ENCODE measurements at regions of chr9 and their contacts with region 1.

Region 1: DNA sequence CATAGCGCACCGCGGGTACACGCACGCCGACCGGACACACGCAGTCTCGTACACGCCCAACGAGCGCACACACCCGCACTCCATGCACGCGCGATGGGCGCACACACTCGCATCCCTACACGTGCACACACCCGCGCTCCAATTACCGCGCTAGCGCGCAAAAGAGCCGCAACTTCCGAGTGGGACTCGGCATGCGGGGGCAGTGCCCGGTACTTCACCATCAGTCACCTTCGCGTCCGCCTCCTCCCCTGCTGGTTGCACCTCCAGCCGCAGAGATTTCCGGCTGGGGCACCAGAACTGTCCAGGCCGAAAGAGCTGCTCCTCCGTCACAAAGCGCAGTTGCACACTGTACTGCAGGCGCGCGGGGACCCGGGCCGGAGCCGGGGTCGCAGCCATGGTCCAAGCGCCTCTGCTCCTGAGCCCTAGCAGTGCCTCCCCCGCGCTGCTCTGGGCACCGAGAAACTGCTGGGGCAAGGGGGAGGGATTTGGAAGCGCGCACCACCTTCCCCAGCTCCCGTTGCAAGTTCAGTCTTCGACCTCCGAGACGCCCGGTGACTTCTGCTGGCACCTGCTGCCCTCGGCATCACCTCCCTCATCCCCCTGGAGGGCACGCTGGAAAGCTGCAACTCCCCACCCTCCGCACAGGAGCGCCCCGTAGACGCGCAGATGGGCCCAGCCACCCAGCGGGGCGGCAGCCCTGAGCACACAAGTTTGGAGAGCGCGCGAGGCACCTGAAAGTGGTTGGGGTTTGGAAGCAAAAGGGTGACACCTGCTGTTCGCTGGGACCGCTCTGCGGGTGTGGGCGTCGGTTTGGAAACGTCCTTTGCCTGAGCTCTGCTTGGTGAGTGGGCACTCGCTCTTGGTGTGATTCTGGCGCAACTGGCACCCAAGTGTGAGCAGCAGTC is 337.4 kb upstream of the PUM3 start:
- DNase-seq: peak; percentile 81 to 83
- H3K4me3 ChIP-seq: peak overlapping the region; percentile 35 to 63 (median 49)
- H3K27ac ChIP-seq: no peak overlapping the region
- H3K4me1 ChIP-seq: peaks cover 0 to 3% (median under 1%) of the 10 kb centered on the region in 4 experiments; a peak in 4 of 7 replicates
- H3K27me3 ChIP-seq: peaks cover 2 to 29% (median 20%) of the 10 kb centered on the region in 4 experiments
- CTCF ChIP-seq: peak; percentile 60 to 64 (median 61)
- EP300 ChIP-seq: no peak
- POLR2A ChIP-seq: no peak
- RAD21 ChIP-seq: peak; percentile 76 to 85

Region 2: GRCh38 chr9:2872257-2872935 is 308.9 kb before region 1 on chr9:
- CTCF ChIA-PET with region 1: interaction called, 14 read pairs
- POLR2A ChIA-PET with region 1: interaction called, 4 read pairs
- DNase-seq: no peak
- H3K4me3 ChIP-seq: no peak overlapping the region
- H3K27ac ChIP-seq: no peak overlapping the region
- H3K4me1 ChIP-seq: no peaks in the 10 kb centered on the region; a peak in 1 of 7 replicates
- H3K27me3 ChIP-seq: no peaks in the 10 kb centered on the region
- CTCF ChIP-seq: peak in 2 of 3 experiments; percentile 41 to 47; a peak in 2 of 4 replicates
- EP300 ChIP-seq: no peak
- POLR2A ChIP-seq: no peak
- RAD21 ChIP-seq: peak; percentile 73 to 78

Region 3: DNA sequence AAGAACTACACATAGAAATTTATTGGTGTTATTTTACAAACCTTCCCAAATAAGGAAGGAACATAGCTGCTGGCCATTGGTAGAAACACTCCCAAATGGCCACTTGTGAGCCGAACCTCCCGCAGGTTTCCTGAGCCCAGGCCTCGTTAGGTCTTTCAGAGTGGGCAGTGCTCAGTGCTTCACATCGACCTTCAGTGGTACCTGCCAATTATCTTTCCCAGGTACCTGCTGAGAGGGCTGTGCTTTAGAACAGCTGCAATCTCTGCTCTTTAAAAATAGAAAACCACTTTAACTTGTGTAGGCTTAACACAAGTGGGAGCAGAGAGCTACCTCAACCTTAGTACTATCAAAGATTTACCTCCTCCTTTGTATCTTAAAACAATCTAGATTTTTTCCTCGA is 10.4 kb after region 1 on chr9:
- CTCF ChIA-PET with region 1: interaction called, 17 read pairs
- POLR2A ChIA-PET with region 1: no interaction called
- DNase-seq: no peak
- H3K4me3 ChIP-seq: no peak overlapping the region
- H3K27ac ChIP-seq: no peak overlapping the region
- H3K4me1 ChIP-seq: no peaks in the 10 kb centered on the region; a peak in 1 of 7 replicates
- H3K27me3 ChIP-seq: no peaks in the 10 kb centered on the region
- CTCF ChIP-seq: no peak
- EP300 ChIP-seq: no peak
- POLR2A ChIP-seq: no peak
- RAD21 ChIP-seq: no peak

Region 4: DNA sequence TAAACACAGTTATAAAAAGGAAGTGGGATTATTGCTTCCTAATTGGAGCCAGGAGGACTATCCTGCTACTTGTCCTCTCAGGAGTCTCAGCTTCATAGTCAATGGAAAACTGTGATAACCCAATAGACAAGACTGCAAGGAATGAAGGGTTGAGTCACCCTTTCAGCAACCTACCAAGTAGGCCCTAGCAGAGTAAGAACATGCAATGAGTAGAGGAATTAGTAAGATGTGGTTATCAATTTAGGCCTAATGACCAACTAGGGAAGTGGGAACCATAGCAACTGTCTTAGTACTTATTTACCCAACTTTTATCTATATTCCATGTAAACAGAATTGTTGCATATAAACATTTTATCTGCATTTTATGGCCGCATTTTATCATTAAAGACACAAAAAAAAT is 34.4 kb after region 1 on chr9:
- CTCF ChIA-PET with region 1: no interaction called
- POLR2A ChIA-PET with region 1: no interaction called
- DNase-seq: no peak
- H3K4me3 ChIP-seq: no peak overlapping the region
- H3K27ac ChIP-seq: no peak overlapping the region
- H3K4me1 ChIP-seq: peaks cover 0 to 6% (median 3%) of the 10 kb centered on the region in 4 experiments; a peak in 2 of 7 replicates
- H3K27me3 ChIP-seq: no peaks in the 10 kb centered on the region; a peak in 1 of 7 replicates
- CTCF ChIP-seq: no peak
- EP300 ChIP-seq: no peak
- POLR2A ChIP-seq: no peak
- RAD21 ChIP-seq: no peak